Activated CD4-positive, alpha-beta T cell treated with anti-CD3 and anti-CD28 coated beads, Interleukin-2, amount 10 ng/mL, durations not matched to agents 24 days and 14 days (primary cell): ENCODE measurements at regions of chr7 and their contacts with region 1.

Region 1: GRCh38 chr7:66277492-66277891 is 72.4 kb downstream of the TPST1 start:
- DNase-seq: no peak
- H3K4me3 Mint-ChIP-seq: no peak overlapping the region
- H3K27ac Mint-ChIP-seq: no peak overlapping the region
- H3K4me1 Mint-ChIP-seq: no peaks in the 10 kb centered on the region
- H3K27me3 Mint-ChIP-seq: peaks cover 3% of the 10 kb centered on the region

Region 2: DNA sequence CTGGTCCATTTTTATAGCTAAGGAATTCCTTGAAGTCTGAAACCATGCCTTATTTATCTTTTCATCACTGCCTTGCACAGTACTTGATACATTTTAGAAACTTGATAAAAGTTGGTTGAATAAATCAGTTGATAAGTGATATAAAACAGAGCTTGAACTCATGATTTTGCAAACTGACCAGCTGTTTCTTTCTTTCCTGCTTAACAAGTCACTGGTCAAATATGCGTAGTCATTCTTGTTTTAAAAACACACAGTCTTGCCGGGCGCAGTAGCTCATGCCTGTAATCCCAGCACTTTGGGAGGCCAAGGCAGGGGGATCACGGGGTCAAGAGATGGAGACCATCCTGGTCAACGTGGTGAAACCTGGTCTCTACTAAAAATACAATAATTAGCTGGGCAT is 66.1 kb before region 1 on chr7:
- intact Hi-C with region 1: loop called (anchors 10 kb)
- DNase-seq: no peak
- H3K4me3 Mint-ChIP-seq: no peak overlapping the region
- H3K27ac Mint-ChIP-seq: no peak overlapping the region
- H3K4me1 Mint-ChIP-seq: peaks cover 17% of the 10 kb centered on the region
- H3K27me3 Mint-ChIP-seq: peaks cover 20% of the 10 kb centered on the region

Region 3: GRCh38 chr7:66832531-66833351 is 555.2 kb after region 1 on chr7:
- intact Hi-C with region 1: no loop called
- DNase-seq: no peak
- H3K4me3 Mint-ChIP-seq: no peak overlapping the region
- H3K27ac Mint-ChIP-seq: no peak overlapping the region
- H3K4me1 Mint-ChIP-seq: no peaks in the 10 kb centered on the region
- H3K27me3 Mint-ChIP-seq: no peaks in the 10 kb centered on the region